ENCODE measurements at regions of chr17 and their contacts with region 1.

Region 1: DNA sequence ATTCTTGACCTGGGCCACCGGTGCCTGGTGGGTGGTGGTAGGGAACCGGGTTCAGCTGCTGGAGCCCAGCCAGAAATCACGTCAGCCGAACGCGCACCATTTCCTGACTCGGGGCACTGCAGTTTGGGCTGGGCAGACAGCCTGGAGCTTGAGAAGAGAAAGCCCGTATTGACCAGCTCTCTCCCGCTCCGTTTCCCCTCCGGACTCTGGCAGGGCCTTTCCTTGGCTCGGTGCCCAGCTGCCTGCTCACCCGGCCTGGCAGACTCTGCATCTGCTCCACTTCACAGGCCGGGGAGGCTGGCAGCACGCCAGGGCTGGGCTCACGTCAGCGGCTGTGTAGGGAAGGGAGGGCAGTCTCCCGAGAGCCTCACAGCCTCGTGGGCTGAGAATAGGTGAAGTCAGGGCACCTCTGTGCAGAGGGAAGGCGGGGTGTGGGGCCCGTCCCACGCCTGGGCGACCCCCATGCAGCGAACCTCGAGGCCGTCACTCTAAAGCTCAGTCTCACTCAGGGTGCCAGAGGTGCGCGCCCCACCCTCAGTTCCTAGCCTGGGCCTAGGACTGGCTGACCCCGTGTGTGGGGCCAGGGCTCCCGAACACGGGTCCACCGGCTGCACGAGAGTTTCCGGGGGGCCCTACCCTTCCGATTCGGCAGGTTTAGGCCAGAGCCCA is 59.1 kb downstream of the OR1D5 start:
- DNase-seq: peak; percentile 80
- H3K4me3 ChIP-seq: peak overlapping the region; percentile 60
- H3K27ac ChIP-seq: peak overlapping the region; percentile 98
- H3K4me1 ChIP-seq: peaks cover 55% of the 10 kb centered on the region
- CTCF ChIP-seq: no peak

Region 2: DNA sequence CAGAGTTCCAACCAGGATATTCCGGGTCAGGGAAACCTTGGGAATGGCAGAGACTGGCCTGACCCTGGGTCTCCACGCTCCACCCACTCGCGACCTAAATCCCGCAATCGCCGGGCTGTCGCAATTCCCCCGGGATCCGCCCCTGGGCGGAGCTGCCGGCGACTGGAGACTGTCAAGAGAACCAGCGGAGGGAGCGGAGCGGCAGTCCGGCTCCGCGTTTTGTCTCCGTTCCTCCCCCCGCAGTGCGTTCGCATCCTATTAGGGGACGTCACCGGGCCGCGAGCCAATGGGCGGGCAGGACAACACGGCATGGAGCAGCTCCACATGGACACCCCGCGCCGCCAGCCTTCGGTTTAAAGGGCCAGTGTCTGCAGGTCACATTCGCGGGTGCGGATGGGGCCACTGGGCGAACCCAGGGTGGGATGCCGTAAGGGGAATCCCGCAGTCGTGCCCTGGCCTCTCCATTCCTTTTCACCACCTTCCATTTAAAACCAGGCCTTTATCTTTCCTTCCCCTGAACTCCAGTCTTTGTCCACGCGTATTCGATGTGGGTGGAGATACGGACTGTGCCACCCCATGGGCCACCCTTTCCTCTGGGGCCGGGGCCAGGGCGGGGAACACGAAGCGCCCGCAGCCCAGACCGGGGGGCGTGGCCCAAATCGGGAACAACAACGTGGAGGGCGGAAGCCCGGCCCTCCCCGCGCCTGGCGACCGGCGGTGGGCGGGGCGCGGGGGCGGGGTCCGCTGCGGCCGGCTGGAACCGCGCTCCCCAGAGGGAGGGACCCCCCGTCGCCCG is 602.6 kb before region 1 on chr17:
- CTCF ChIA-PET with region 1: no interaction called
- POLR2A ChIA-PET with region 1: no interaction called
- intact Hi-C with region 1: loop called (anchors 5 kb)
- DNase-seq: peak; percentile 99
- H3K4me3 ChIP-seq: peak overlapping the region; percentile 81
- H3K27ac ChIP-seq: peak overlapping the region; percentile 82
- H3K4me1 ChIP-seq: peaks cover 27% of the 10 kb centered on the region
- CTCF ChIP-seq: no peak

Region 3: DNA sequence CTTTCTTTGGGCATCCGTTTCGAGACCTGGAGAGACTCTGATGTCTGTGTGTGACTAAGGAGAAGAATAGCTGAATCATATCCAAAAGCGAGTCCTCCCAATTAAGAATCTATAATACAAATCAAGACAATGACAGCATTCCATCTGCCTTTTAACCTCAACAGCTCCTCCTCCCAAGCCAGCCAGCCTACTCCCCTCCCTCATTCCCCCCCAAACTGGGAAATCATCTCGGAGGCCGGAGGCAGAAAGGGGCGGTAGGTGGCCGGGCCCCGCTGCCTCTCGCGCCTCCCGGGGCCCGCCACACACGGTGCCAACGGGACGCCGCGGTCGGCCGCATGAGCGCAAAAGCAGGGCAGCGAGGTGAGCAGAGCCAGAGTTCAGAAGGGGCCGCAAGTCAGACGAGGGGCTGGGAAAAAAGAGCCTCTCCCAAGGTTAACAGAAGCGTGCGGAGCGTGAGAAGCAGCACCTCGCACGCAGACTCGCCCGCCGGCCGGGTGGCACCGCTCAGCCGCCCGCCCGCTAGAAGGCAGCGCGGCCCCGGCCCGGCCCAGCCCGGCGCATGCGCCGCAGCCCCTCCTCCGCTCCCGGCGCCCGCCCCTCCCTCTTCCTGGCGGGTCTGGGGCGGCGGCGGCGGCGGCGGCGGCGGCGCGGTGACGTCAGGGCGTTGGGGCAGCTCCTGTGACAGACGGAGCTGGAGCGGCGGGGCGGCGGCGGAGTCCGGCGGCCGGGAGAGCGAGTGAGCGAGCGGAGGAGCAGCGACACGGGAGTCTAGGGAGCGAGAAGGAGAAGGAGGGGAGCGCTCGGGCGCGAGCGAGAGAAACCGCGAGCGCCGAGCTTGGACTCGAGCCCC is 411.1 kb before region 1 on chr17 and contains the start of gene PAFAH1B1:
- CTCF ChIA-PET with region 1: no interaction called
- POLR2A ChIA-PET with region 1: no interaction called
- intact Hi-C with region 1: loop called (anchors 5 kb)
- DNase-seq: peak; percentile 91
- H3K4me3 ChIP-seq: peak within 1 kb of the TSS; percentile 91
- H3K27ac ChIP-seq: peak within 1 kb of the TSS; percentile 80
- H3K4me1 ChIP-seq: peaks cover 26% of the 10 kb centered on the region
- CTCF ChIP-seq: peak; percentile 39; the same call in 1 of the 2 replicates
- total RNA-seq, gene PAFAH1B1: 51.1 and 61.3 TPM in 2 replicates

Region 4: DNA sequence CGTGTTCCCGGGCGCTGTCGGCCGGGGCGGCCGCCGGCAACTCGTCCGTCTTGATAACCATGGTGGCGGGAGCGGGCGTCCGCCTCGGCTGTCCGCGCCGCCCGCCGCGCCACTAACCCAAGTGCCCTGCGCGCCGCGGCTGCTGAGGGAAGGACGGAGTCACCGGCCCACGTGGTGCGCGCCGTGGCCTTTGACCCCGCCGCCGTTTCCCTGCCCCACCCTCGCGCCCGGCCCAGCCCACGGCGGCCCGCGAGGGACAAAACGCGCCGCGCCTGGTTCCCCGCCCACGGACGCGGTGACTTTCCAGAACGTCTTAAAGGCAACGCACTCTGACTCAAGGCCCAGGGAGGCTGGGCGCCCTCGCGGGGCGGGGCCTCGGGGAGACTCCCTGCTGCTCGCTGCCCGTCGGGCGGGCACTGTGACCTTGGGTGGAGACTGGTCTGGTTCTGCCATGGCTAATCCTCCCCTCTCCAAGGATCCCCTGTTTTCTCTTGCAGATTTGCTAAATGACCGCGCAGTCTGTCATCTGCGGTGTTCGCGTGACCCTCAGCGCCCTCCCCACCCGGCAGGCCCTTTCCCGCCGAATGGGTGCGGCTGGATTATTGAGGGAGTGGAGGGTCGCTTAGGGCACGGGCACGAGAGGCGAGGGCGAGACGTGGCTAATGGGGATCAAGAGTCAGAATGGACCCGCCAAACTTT is 292.5 kb before region 1 on chr17 and contains the start of gene CLUH:
- CTCF ChIA-PET with region 1: no interaction called
- POLR2A ChIA-PET with region 1: no interaction called
- intact Hi-C with region 1: loop called (anchors 2 kb)
- DNase-seq: peak; percentile 94
- H3K4me3 ChIP-seq: peak within 1 kb of the TSS; percentile 100
- H3K27ac ChIP-seq: peak within 1 kb of the TSS; percentile 65
- H3K4me1 ChIP-seq: peaks cover 35% of the 10 kb centered on the region
- CTCF ChIP-seq: no peak
- total RNA-seq, gene CLUH: 85.2 and 96.3 TPM in 2 replicates

Region 5: GRCh38 chr17:2852729-2853110 is 151.5 kb before region 1 on chr17:
- CTCF ChIA-PET with region 1: interaction called, 5 read pairs
- POLR2A ChIA-PET with region 1: interaction called, 4 read pairs
- intact Hi-C with region 1: loop called (anchors 1 kb)
- DNase-seq: no peak
- H3K4me3 ChIP-seq: peak overlapping the region; percentile 75
- H3K27ac ChIP-seq: peak overlapping the region; percentile 80
- H3K4me1 ChIP-seq: peaks cover 69% of the 10 kb centered on the region
- CTCF ChIP-seq: no peak

Region 6: DNA sequence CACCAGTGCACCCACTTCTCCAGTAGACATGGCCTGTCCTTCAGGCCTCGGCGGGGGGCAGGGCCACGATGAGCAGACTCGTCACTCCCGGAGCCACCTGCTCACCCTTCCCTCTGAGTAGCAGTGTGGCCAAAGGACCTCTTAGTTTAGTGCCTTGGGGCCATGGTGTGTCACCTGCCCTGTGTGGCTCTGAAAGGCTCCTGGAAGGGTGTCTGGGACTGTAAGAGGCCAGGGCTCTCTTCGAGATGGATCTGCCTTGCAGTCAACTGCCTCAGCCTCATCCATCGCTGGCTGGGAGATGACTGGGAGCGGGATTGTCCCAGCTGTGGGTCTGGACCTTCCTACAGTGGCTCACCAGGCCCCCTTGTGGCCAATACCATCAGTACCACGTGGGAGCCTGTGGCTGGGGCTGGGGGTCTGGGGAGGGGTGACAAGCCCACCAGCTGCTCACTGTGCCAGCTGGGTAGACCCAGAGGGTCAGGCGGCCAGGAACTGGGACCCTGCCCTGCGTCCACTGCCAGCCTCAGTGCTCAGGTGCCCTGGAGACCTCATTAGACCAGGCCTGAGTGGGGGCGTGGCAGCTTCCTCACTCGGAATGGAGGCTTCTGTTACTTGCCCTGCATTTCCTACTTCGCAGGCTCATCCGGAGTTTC is 74.3 kb before region 1 on chr17:
- CTCF ChIA-PET with region 1: interaction called, 3 read pairs
- POLR2A ChIA-PET with region 1: interaction called, 18 read pairs
- intact Hi-C with region 1: loop called (anchors 1 kb)
- DNase-seq: peak; percentile 70
- H3K4me3 ChIP-seq: no peak overlapping the region
- H3K27ac ChIP-seq: peak overlapping the region; percentile 89
- H3K4me1 ChIP-seq: peaks cover 42% of the 10 kb centered on the region
- CTCF ChIP-seq: peak; percentile 90

Region 7: GRCh38 chr17:3026856-3027751 is 22.8 kb after region 1 on chr17:
- CTCF ChIA-PET with region 1: no interaction called
- POLR2A ChIA-PET with region 1: no interaction called
- intact Hi-C with region 1: no loop called
- DNase-seq: no peak
- H3K4me3 ChIP-seq: no peak overlapping the region
- H3K27ac ChIP-seq: no peak overlapping the region
- H3K4me1 ChIP-seq: no peaks in the 10 kb centered on the region
- CTCF ChIP-seq: no peak

Region 8: DNA sequence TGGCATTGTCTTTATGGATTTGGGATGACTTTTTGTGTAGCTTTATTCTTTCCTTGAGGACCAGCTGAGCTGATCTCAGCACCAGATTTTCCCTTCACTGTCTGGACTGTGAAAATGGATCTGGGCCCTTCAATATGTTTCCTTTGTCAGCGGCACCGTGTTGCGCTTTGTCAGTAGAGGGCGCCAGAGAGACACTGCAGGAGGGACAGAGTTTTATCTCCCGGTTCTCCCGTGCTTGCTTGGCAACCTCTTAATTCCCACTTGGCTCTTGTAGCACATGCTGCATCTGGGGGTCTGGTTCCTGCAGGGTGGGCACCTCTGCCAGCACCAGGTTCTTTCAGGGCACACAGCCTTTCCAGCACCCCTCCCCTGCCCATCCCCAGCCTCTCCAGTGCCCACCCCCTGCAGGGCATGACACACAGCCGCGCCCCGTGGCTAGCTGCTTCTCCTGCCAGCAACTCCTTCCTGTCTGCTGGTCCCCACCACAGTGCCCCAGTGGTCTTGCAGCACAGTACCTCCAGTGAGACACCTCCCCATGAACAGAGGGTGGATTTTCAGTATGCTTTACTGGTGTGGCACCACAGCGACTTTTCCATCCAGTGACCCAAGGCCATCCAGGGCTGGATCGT is 39.6 kb after region 1 on chr17:
- CTCF ChIA-PET with region 1: no interaction called
- POLR2A ChIA-PET with region 1: no interaction called
- intact Hi-C with region 1: no loop called
- DNase-seq: peak; percentile 34
- H3K4me3 ChIP-seq: no peak overlapping the region
- H3K27ac ChIP-seq: no peak overlapping the region
- H3K4me1 ChIP-seq: peaks cover 12% of the 10 kb centered on the region
- CTCF ChIP-seq: peak; percentile 77

Region 9: DNA sequence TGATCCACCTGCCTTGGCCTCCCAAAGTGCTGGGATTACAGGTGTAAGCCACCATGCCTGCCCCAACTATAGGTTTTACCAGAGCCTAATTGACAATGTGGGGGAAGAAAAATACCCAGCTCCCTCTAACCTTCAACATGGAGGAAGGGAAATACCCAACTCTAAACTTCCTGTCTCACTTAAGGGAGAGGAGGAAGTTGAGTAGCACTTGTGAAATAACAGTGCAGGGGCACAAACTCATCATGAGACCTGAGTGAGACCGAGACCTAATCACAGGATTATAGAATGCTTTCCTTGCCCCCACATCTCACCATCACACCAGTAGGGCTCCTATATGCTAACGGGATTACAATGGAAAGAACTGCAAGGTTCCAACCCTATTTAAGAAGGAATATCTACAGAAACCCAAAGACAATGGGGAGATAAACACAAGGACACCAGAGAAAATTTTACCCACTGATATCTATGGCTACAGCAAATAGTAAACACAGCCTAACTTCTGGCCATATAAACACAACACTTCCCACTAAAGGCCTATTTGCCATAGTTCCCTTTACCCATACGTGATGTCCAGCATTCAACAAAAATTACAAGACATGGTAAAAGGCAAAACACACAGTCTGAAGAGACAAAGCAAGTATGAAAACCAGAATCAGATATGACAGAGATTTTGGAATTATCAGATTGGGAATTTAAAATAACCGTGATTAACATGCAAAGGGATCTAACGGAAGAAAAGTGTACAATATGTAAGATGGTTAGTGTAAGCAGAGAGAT is 267.0 kb after region 1 on chr17:
- CTCF ChIA-PET with region 1: no interaction called
- POLR2A ChIA-PET with region 1: no interaction called
- intact Hi-C with region 1: no loop called
- DNase-seq: no peak
- H3K4me3 ChIP-seq: no peak overlapping the region
- H3K27ac ChIP-seq: no peak overlapping the region
- H3K4me1 ChIP-seq: no peaks in the 10 kb centered on the region
- CTCF ChIP-seq: no peak

Measured in OCI-LY7 (cell line).